H1 (cell line): ENCODE measurements at regions of chr1 and their contacts with region 1.

Region 1: DNA sequence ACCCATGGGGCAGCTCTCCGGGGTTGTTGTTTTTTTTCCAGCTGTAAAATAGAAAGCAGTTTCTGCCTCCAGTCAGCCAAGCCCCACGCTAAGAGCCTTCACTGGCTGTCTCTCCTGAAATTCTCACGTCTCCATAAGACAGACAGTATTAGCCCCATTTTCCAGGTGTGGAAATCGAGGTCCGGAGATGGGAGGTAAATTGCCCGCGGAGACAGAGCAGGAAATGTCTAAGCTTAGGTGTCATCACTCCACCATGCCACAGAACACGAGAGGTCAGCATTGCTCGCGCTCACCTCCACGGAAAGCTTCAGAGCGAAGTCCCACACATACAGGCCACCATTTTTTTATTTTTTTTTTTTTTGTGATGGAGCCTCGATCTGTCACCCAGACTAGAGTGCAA is 44.6 kb downstream of the TNFRSF8 start:
- DNase-seq: no peak
- H3K4me3 ChIP-seq: no peak overlapping the region
- H3K27ac ChIP-seq: no peak overlapping the region
- H3K4me1 ChIP-seq: no peaks in the 10 kb centered on the region
- H3K27me3 ChIP-seq: no peaks in the 10 kb centered on the region
- CTCF ChIP-seq: no peak
- EP300 ChIP-seq: no peak
- POLR2A ChIP-seq: no peak
- RAD21 ChIP-seq: no peak

Region 2: DNA sequence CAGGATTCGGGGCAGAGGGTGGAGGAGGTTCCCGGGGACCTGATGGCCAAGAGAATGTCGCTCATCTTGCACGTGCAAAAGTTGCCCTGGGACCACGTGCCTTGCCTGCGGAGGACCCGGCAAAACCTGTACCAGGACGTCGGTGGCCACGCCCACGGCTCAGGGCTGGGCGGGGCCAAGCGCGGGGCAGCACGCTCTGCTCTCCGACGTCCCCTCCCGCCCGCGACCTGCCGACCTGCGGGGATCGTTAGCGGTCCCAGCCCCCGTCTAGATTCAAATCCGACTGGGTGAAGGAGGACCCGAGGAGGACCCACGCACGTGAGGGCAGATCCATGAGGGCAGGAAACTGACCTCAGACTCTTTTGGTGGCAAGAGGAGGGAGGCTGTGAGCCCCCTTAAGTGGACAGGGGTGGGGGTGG is 345.7 kb before region 1 on chr1 and contains the start of gene C1orf167:
- CTCF ChIA-PET with region 1: no interaction called
- POLR2A ChIA-PET with region 1: no interaction called
- DNase-seq: peak in 1 of 2 experiments; percentile 83
- H3K4me3 ChIP-seq: peak within 1 kb of the TSS in 2 of 4 experiments; percentile 26 to 51; a peak in 4 of 8 replicates
- H3K27ac ChIP-seq: no peak within 1 kb of the TSS
- H3K4me1 ChIP-seq: peaks cover 0 to 16% (median 10%) of the 10 kb centered on the region in 4 experiments; a peak in 6 of 7 replicates
- H3K27me3 ChIP-seq: peaks cover 7 to 40% (median 30%) of the 10 kb centered on the region in 4 experiments
- CTCF ChIP-seq: no peak
- EP300 ChIP-seq: no peak
- POLR2A ChIP-seq: no peak
- RAD21 ChIP-seq: no peak
- total RNA-seq, gene C1orf167: 0.90 and 1.3 TPM in 2 replicates

Region 3: GRCh38 chr1:12095452-12096263 is 12.1 kb before region 1 on chr1:
- CTCF ChIA-PET with region 1: interaction called, 14 read pairs
- POLR2A ChIA-PET with region 1: interaction called, 3 read pairs
- DNase-seq: no peak
- H3K4me3 ChIP-seq: no peak overlapping the region
- H3K27ac ChIP-seq: no peak overlapping the region
- H3K4me1 ChIP-seq: no peaks in the 10 kb centered on the region
- H3K27me3 ChIP-seq: no peaks in the 10 kb centered on the region
- CTCF ChIP-seq: no peak
- EP300 ChIP-seq: no peak
- POLR2A ChIP-seq: no peak
- RAD21 ChIP-seq: no peak

Region 4: GRCh38 chr1:12159816-12160215 is 52.1 kb after region 1 on chr1:
- CTCF ChIA-PET with region 1: no interaction called
- POLR2A ChIA-PET with region 1: no interaction called
- DNase-seq: no peak
- H3K4me3 ChIP-seq: no peak overlapping the region
- H3K27ac ChIP-seq: no peak overlapping the region
- H3K4me1 ChIP-seq: peaks cover 0 to 7% (median 0%) of the 10 kb centered on the region in 4 experiments; a peak in 2 of 7 replicates
- H3K27me3 ChIP-seq: no peaks in the 10 kb centered on the region; a peak in 1 of 7 replicates
- CTCF ChIP-seq: no peak
- EP300 ChIP-seq: no peak
- POLR2A ChIP-seq: no peak
- RAD21 ChIP-seq: no peak

Region 5: DNA sequence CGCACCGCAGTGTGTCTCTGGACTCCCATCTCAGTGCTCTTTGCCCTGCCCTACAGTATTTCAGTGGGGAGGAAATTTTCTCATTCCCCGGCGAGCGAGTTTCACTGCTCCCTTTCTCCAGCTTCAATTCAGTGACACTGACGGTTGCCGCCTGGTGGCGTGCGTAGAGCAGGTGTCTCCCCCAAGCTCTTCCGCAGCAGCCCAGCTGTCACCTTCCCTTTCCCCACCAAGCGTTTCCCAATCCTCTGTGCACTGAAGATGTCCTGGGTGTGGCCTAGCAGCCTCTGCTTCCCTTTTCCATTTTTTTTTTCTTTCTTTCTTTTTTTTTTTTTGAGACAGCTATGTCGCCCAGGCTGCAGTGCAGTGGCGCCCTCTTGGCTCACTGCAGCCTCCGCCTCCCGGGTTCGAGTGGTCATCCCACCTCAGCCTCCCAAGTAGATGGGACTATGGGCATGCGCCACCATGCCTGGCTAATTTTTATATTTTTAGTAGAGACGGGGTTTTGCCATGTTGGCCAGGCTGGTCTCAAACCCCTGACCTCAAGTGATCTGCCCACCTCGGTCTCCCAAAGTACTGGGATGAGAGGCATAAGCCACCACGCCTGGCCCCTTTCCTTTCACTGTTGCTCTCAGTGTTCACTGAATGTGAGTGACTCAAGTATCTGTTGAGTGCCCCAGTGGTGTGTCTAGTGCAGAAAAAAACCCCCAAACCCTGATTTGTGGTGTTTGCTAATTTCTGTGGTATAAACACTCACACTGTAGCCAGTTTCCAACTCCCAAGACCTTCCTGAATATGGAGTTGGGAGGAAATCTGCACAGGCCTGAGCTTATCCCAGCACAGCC is 89.1 kb after region 1 on chr1:
- CTCF ChIA-PET with region 1: interaction called, 10 read pairs
- POLR2A ChIA-PET with region 1: no interaction called
- DNase-seq: no peak
- H3K4me3 ChIP-seq: no peak overlapping the region
- H3K27ac ChIP-seq: no peak overlapping the region
- H3K4me1 ChIP-seq: peaks cover 0 to 5% (median 2%) of the 10 kb centered on the region in 4 experiments; a peak in 2 of 7 replicates
- H3K27me3 ChIP-seq: no peaks in the 10 kb centered on the region
- CTCF ChIP-seq: peak; percentile 62 to 73 (median 65)
- EP300 ChIP-seq: no peak
- POLR2A ChIP-seq: no peak
- RAD21 ChIP-seq: peak; percentile 41 to 62; a peak in 3 of 4 replicates

Region 6: GRCh38 chr1:12208764-12209494 is 101.2 kb after region 1 on chr1:
- CTCF ChIA-PET with region 1: interaction called, 30 read pairs
- POLR2A ChIA-PET with region 1: no interaction called
- DNase-seq: peak; percentile 82 to 99
- H3K4me3 ChIP-seq: no peak overlapping the region
- H3K27ac ChIP-seq: no peak overlapping the region
- H3K4me1 ChIP-seq: peaks cover 3 to 6% (median 4%) of the 10 kb centered on the region in 4 experiments; a peak in 6 of 7 replicates
- H3K27me3 ChIP-seq: no peaks in the 10 kb centered on the region
- CTCF ChIP-seq: peak; percentile 94 to 98 (median 94)
- EP300 ChIP-seq: no peak
- POLR2A ChIP-seq: no peak
- RAD21 ChIP-seq: peak; percentile 97